CD4-positive, alpha-beta memory T cell (primary cell): ENCODE measurements at regions of chr4 and their contacts with region 1.

Region 1: DNA sequence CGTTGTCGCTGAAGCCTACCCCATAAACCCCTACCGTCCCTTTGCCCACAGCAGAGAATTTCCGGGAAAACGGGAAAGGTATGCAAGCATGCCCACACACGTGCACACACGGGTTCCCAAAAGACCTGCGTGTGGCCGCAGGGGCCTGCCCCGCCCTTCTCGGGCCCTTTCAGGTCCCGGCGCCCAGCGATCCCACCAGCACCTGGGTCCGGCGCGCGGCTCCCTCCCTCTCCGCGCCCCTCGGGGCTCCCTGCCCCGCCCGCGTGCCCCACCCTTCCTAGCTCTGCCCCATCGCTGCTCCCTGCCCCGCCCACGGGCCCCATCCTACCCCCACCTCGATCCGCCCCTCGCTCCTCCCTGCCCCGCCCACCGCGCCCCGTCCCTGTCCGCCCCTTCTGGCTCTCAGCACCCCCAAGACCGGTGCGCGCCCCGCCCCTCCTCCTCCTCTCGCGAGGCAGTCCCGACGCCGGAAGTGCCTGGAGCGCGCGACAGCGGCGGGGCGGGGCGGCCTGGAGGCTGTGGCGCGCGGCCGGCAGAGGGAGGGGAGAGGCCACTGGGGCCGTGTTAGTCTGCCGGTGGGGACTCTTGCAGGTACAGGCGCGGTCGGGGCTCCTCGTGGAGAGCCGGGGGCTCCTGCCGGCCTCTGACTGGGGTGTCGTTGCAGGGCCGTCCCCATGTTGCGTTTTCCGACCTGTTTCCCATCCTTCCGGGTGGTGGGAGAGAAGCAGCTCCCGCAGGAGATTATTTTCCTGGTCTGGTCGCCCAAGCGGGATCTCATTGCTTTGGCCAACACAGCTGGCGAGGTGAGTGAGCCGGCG is at the start of gene ANAPC4:
- DNase-seq: peak; percentile 92 to 97 (median 93)
- H3K4me3 ChIP-seq: peak within 1 kb of the TSS; percentile 57 to 95
- H3K4me3 Mint-ChIP-seq: peak within 1 kb of the TSS in 1 of 8 donors; percentile 80
- H3K27ac ChIP-seq: peak within 1 kb of the TSS; percentile 73
- H3K27ac Mint-ChIP-seq: peak within 1 kb of the TSS; percentile 65 to 92 (median 89)
- H3K4me1 ChIP-seq: peaks cover 24% of the 10 kb centered on the region
- H3K4me1 Mint-ChIP-seq: peaks cover 3 to 13% (median 10%) of the 10 kb centered on the region in 4 donors
- H3K27me3 ChIP-seq: no peaks in the 10 kb centered on the region
- H3K27me3 Mint-ChIP-seq: no peaks in the 10 kb centered on the region
- total RNA-seq, gene ANAPC4: 61.8 to 63.7 TPM

Region 2: GRCh38 chr4:25346913-25347312 is 30.1 kb before region 1 on chr4:
- CTCF ChIA-PET with region 1: no interaction called
- POLR2A ChIA-PET with region 1: no interaction called
- intact Hi-C with region 1: no loop called
- DNase-seq: no peak
- H3K4me3 ChIP-seq: no peak overlapping the region
- H3K4me3 Mint-ChIP-seq: no peak overlapping the region
- H3K27ac ChIP-seq: no peak overlapping the region
- H3K27ac Mint-ChIP-seq: peak overlapping the region in 5 of 7 donors; percentile 6 to 79 (median 48)
- H3K4me1 ChIP-seq: no peaks in the 10 kb centered on the region
- H3K4me1 Mint-ChIP-seq: no peaks in the 10 kb centered on the region
- H3K27me3 ChIP-seq: no peaks in the 10 kb centered on the region
- H3K27me3 Mint-ChIP-seq: no peaks in the 10 kb centered on the region

Region 3: GRCh38 chr4:25621027-25621930 is 244.3 kb after region 1 on chr4:
- CTCF ChIA-PET with region 1: no interaction called
- POLR2A ChIA-PET with region 1: no interaction called
- intact Hi-C with region 1: no loop called
- DNase-seq: no peak
- H3K4me3 ChIP-seq: no peak overlapping the region
- H3K4me3 Mint-ChIP-seq: no peak overlapping the region
- H3K27ac ChIP-seq: no peak overlapping the region
- H3K27ac Mint-ChIP-seq: no peak overlapping the region
- H3K4me1 ChIP-seq: no peaks in the 10 kb centered on the region
- H3K4me1 Mint-ChIP-seq: peaks cover 0 to 3% (median under 1%) of the 10 kb centered on the region in 4 donors
- H3K27me3 ChIP-seq: no peaks in the 10 kb centered on the region
- H3K27me3 Mint-ChIP-seq: peaks cover 4 to 5% of the 10 kb centered on the region in 2 donors

Region 4: GRCh38 chr4:26319467-26319948 is 942.5 kb after region 1 on chr4:
- CTCF ChIA-PET with region 1: no interaction called
- POLR2A ChIA-PET with region 1: no interaction called
- intact Hi-C with region 1: loop called (anchors 5 kb)
- DNase-seq: peak; percentile 96 to 98 (median 96)
- H3K4me3 ChIP-seq: peak overlapping the region; percentile 86
- H3K4me3 Mint-ChIP-seq: peak overlapping the region; percentile 96 to 100 (median 97)
- H3K27ac ChIP-seq: peak overlapping the region; percentile 97
- H3K27ac Mint-ChIP-seq: peak overlapping the region; percentile 98 to 99 (median 99)
- H3K4me1 ChIP-seq: peaks cover 32% of the 10 kb centered on the region
- H3K4me1 Mint-ChIP-seq: peaks cover 21 to 55% (median 32%) of the 10 kb centered on the region in 4 donors
- H3K27me3 ChIP-seq: no peaks in the 10 kb centered on the region
- H3K27me3 Mint-ChIP-seq: peaks cover 0 to 2% of the 10 kb centered on the region in 2 donors

Region 5: GRCh38 chr4:26590639-26591038 is 1213.7 kb after region 1 on chr4:
- CTCF ChIA-PET with region 1: no interaction called
- POLR2A ChIA-PET with region 1: no interaction called
- intact Hi-C with region 1: loop called (anchors 5 kb)
- DNase-seq: no peak
- H3K4me3 ChIP-seq: no peak overlapping the region
- H3K4me3 Mint-ChIP-seq: no peak overlapping the region
- H3K27ac ChIP-seq: no peak overlapping the region
- H3K27ac Mint-ChIP-seq: no peak overlapping the region
- H3K4me1 ChIP-seq: no peaks in the 10 kb centered on the region
- H3K4me1 Mint-ChIP-seq: peaks cover 8 to 19% (median 16%) of the 10 kb centered on the region in 4 donors
- H3K27me3 ChIP-seq: no peaks in the 10 kb centered on the region
- H3K27me3 Mint-ChIP-seq: no peaks in the 10 kb centered on the region